CD14-positive monocyte (primary cell): ENCODE measurements at regions of chr6 and their contacts with region 1.

Region 1: GRCh38 chr6:33417903-33418689 is at the start of gene CUTA:
- DNase-seq: peak; percentile 99 to 100 (median 100)
- H3K4me3 ChIP-seq: peak within 1 kb of the TSS; percentile 51 to 84 (median 71)
- H3K4me3 Mint-ChIP-seq: peak within 1 kb of the TSS; percentile 86 to 93
- H3K27ac ChIP-seq: peak within 1 kb of the TSS; percentile 60 to 97
- H3K27ac Mint-ChIP-seq: peak within 1 kb of the TSS; percentile 95 to 98 (median 96)
- H3K4me1 ChIP-seq: peaks cover 29 to 51% of the 10 kb centered on the region in 2 donors
- H3K4me1 Mint-ChIP-seq: peaks cover 44% of the 10 kb centered on the region
- H3K27me3 ChIP-seq: no peaks in the 10 kb centered on the region
- H3K27me3 Mint-ChIP-seq: peaks cover 2 to 20% (median 16%) of the 10 kb centered on the region in 3 donors
- CTCF ChIP-seq: peak; percentile 33
- polyA plus RNA-seq, gene CUTA: 137 to 160 (median 153) TPM

Region 2: GRCh38 chr6:33200219-33201146 is 217.6 kb before region 1 on chr6 and contains the starts of genes RXRB and SLC39A7:
- intact Hi-C with region 1: loop called in 1 of 2 experiments (anchors 10 kb)
- DNase-seq: peak; percentile 99
- H3K4me3 ChIP-seq: peak within 1 kb of the TSS; percentile 83 to 96 (median 95)
- H3K4me3 Mint-ChIP-seq: peak within 1 kb of the TSS; percentile 94 to 96
- H3K27ac ChIP-seq: peak within 1 kb of the TSS; percentile 94
- H3K27ac Mint-ChIP-seq: peak within 1 kb of the TSS; percentile 95 to 99 (median 97)
- H3K4me1 ChIP-seq: peaks cover 40 to 53% of the 10 kb centered on the region in 2 donors
- H3K4me1 Mint-ChIP-seq: peaks cover 60% of the 10 kb centered on the region
- H3K27me3 ChIP-seq: no peaks in the 10 kb centered on the region
- H3K27me3 Mint-ChIP-seq: peaks cover 0 to 5% (median 0%) of the 10 kb centered on the region in 3 donors
- CTCF ChIP-seq: no peak
- polyA plus RNA-seq, gene RXRB: 4.5 to 74.5 (median 5.1) TPM
- polyA plus RNA-seq, gene SLC39A7: 14.5 to 32.7 (median 17.7) TPM

Region 3: GRCh38 chr6:33317669-33318425 is 100.2 kb before region 1 on chr6 and contains the start of gene ZBTB22:
- intact Hi-C with region 1: loop called in 1 of 2 experiments (anchors 10 kb)
- DNase-seq: peak; percentile 95 to 97 (median 95)
- H3K4me3 ChIP-seq: peak within 1 kb of the TSS; percentile 50 to 99 (median 89)
- H3K4me3 Mint-ChIP-seq: peak within 1 kb of the TSS; percentile 98
- H3K27ac ChIP-seq: peak within 1 kb of the TSS; percentile 77
- H3K27ac Mint-ChIP-seq: peak within 1 kb of the TSS; percentile 97 to 100 (median 98)
- H3K4me1 ChIP-seq: peaks cover 62 to 74% of the 10 kb centered on the region in 2 donors
- H3K4me1 Mint-ChIP-seq: peaks cover 71% of the 10 kb centered on the region
- H3K27me3 ChIP-seq: no peaks in the 10 kb centered on the region
- H3K27me3 Mint-ChIP-seq: peaks cover 0 to 2% (median 1%) of the 10 kb centered on the region in 3 donors
- CTCF ChIP-seq: no peak
- polyA plus RNA-seq, gene ZBTB22: 12.2 to 16.5 (median 16.1) TPM

Region 4: GRCh38 chr6:33454009-33454946 is 36.2 kb after region 1 on chr6 and contains the start of gene ZBTB9:
- intact Hi-C with region 1: loop called in 1 of 2 experiments (anchors 5 kb)
- DNase-seq: peak; percentile 93 to 96 (median 94)
- H3K4me3 ChIP-seq: peak within 1 kb of the TSS; percentile 88 to 96 (median 95)
- H3K4me3 Mint-ChIP-seq: peak within 1 kb of the TSS; percentile 89 to 91
- H3K27ac ChIP-seq: peak within 1 kb of the TSS; percentile 56 to 82
- H3K27ac Mint-ChIP-seq: peak within 1 kb of the TSS; percentile 86 to 95 (median 89)
- H3K4me1 ChIP-seq: peaks cover 45 to 58% of the 10 kb centered on the region in 2 donors
- H3K4me1 Mint-ChIP-seq: peaks cover 53% of the 10 kb centered on the region
- H3K27me3 ChIP-seq: no peaks in the 10 kb centered on the region
- H3K27me3 Mint-ChIP-seq: peaks cover 0 to 3% (median 2%) of the 10 kb centered on the region in 3 donors
- CTCF ChIP-seq: no peak
- polyA plus RNA-seq, gene ZBTB9: 0.42 to 2.0 (median 1.1) TPM

Region 5: DNA sequence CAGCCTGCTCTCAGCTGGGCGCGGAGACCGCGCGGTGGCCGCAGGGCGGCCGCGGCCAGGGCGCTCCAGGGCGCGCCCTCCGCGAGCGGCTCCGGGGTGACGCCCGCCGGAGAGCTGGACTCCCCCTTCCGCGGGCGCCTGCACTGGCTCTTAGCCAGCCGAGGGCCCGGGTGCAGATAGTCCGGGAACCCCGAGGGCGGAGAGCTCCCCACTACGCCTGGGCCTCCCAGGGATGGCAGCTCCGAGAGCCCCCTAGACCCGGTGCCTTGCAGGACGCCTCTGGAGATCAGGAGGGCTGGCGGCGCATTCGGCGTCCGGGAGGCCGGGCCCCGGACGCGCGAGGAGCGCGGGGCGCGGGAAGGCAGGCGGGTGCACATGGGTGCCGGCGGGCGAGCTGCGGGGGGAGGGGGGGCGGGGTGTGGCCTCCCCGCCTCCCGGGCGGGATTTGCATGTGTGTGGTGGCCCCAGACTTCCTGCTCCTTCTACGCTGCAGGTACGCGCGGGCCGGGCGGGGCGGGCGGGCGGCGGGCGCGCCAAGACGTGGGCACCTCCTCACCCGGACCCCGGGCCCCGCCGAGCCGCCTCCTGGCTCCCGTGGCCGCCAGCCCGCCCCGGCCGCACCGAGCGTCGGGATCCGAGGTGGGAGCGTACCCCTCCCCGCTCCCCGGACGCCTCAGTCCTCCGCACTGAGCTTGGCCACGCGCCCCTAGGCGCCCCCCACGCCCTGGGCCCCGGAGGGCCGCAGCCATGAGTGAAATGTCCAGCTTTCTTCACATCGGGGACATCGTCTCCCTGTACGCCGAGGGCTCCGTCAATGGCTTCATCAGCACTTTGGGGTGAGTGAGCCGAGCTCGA is 203.0 kb after region 1 on chr6 and contains the start of gene ITPR3:
- intact Hi-C with region 1: no loop called
- DNase-seq: peak in 2 of 3 donors; percentile 17 to 24
- H3K4me3 ChIP-seq: peak within 1 kb of the TSS; percentile 62 to 96 (median 67)
- H3K4me3 Mint-ChIP-seq: peak within 1 kb of the TSS; percentile 99
- H3K27ac ChIP-seq: peak within 1 kb of the TSS in 1 of 2 donors; percentile 55
- H3K27ac Mint-ChIP-seq: peak within 1 kb of the TSS in 6 of 7 donors; percentile 59 to 88 (median 80)
- H3K4me1 ChIP-seq: peaks cover 14 to 32% of the 10 kb centered on the region in 2 donors
- H3K4me1 Mint-ChIP-seq: peaks cover 41% of the 10 kb centered on the region
- H3K27me3 ChIP-seq: peaks cover 3 to 31% of the 10 kb centered on the region in 2 donors
- H3K27me3 Mint-ChIP-seq: peaks cover 19 to 47% (median 19%) of the 10 kb centered on the region in 3 donors
- CTCF ChIP-seq: no peak
- polyA plus RNA-seq, gene ITPR3: 1.8 TPM in 1 of 3 donors, not detected in the others